ENCODE measurements at regions of chr11 and their contacts with region 1.

Region 1: DNA sequence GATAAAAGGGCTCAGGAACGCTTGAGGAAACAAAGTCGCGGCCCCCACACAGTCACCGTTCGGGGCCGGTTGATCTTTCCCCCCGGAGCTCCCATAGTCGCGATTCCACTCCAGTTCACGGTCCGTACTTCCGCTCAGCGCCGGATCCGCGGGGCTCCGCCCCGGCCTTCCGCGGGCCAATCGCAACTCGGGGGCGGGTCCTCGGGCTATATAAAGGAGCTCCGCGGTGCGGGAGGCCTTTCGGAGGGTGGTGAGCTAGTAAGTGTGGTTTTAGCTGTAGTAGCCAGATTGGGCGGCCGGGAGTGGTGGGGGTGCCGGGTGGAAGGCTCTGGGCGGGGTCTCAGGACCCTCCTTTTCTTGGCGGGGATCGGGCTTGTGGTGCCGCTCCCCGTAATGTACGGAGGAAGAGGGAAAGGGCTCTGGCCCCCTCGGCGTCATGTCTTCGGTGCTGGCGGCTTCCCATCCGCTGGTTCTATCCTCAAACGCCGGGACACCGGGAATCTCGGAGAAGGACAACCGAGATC is at the starts of genes C11orf98 and CSKMT:
- DNase-seq: no peak
- H3K4me3 ChIP-seq: peak within 1 kb of the TSS; percentile 92
- CTCF ChIP-seq: no peak

Region 2: GRCh38 chr11:62573592-62574362 is 91.4 kb before region 1 on chr11 and contains the start of gene EEF1G:
- CTCF ChIA-PET with region 1: no interaction called
- POLR2A ChIA-PET with region 1: interaction called, 16 read pairs
- DNase-seq: peak; percentile 99
- H3K4me3 ChIP-seq: peak within 1 kb of the TSS; percentile 97
- CTCF ChIP-seq: no peak

Region 3: DNA sequence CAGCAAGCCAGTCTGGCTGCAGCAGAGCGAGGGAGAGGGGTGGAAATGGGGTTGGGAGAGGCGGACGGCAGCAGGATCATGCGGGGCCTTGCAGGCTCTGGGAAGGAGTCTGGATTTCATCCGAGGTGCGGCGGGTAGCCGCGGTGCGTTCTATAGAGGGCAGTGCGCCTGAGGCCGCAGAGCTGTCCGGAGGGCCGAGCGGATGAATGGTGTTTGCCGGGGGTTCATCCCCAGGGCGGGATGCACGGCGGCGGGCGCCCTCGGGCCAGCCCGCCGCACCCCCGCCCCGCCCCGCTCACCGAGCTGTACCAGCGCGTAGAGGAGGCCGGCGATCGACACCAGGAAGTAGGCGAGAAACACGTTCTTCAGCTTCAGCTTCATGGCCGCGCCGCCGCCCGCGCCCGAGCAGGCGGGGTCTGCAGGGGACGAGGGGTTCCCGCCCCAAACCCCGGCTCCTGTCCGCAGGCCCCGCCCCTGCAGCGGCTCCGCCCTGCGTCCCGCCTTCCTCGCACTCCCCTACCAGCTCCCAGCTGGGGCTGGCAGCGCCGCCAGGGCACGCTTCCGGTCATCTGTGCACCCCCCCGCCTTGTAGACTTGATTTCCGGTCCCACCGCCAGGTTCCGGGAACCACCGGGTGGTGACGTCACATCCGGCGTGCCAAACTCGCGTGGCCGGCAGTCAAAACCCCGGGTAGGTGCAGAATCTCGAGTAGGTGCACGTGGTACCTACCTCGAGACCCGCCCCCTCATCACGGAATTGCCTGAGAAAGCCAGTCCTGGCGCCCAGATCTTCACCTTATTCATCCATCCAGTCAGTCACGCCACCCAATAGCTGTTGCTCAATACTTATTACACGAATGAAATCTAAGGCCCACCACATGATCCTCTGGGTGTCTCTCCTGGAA is 43.3 kb before region 1 on chr11 and contains the start of gene B3GAT3:
- CTCF ChIA-PET with region 1: interaction called, 3 read pairs
- POLR2A ChIA-PET with region 1: interaction called, 16 read pairs
- DNase-seq: peak; percentile 82
- H3K4me3 ChIP-seq: peak within 1 kb of the TSS; percentile 83
- CTCF ChIP-seq: peak; percentile 24

Region 4: GRCh38 chr11:62678770-62679696 is 13.9 kb after region 1 on chr11 and contains the start of gene UBXN1:
- CTCF ChIA-PET with region 1: interaction called, 30 read pairs
- POLR2A ChIA-PET with region 1: interaction called, 44 read pairs
- DNase-seq: no peak
- H3K4me3 ChIP-seq: peak within 1 kb of the TSS; percentile 95
- CTCF ChIP-seq: no peak

Region 5: DNA sequence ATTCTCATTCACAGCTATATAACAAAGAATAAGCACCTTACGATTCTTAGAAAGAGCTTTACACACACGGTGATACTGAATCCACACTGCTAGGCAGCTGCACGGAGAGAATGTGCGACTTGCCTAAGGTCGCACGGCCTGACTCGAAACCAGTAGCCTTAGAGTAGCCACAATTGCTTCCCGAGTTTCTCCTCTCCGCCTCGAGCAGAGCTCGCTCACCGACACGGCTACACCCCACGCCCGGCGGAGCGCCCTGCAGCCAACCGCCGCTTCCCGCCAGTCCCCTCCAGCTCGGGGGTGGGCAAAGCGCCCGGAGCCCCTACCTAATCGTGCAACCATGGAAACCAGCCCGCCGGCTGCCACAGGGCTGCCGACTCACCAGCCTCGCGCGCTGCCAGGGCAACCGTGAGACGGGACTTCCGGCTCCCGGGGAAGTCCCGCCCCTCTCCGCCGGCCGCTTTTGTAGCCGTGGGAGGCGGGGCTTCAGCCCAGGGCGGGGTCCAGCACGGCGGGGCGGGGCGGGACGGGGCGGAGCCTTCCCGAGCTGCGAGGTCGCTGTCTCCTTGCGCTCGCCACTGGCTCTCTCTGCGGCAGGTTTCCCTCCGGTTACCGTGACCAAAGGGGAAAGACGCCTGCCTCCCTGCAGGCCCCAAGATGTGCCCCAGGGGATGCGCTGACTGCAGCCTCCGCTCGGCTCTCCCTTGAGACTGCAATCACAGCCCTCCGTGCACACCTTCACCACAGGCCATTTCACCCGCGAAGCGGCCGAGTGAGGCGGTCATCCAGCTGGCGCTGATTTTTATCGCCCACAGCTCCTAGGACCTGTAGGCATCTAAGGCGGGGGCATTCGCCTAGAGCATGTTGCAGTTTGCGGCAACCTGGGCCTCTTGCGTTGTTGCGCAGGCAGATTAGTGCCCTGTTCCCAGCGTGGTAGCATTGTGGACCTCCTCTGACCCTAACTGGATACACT is 41.0 kb after region 1 on chr11:
- CTCF ChIA-PET with region 1: interaction called, 3 read pairs
- POLR2A ChIA-PET with region 1: interaction called, 18 read pairs
- DNase-seq: no peak
- H3K4me3 ChIP-seq: peak overlapping the region; percentile 77
- CTCF ChIP-seq: no peak

Region 6: DNA sequence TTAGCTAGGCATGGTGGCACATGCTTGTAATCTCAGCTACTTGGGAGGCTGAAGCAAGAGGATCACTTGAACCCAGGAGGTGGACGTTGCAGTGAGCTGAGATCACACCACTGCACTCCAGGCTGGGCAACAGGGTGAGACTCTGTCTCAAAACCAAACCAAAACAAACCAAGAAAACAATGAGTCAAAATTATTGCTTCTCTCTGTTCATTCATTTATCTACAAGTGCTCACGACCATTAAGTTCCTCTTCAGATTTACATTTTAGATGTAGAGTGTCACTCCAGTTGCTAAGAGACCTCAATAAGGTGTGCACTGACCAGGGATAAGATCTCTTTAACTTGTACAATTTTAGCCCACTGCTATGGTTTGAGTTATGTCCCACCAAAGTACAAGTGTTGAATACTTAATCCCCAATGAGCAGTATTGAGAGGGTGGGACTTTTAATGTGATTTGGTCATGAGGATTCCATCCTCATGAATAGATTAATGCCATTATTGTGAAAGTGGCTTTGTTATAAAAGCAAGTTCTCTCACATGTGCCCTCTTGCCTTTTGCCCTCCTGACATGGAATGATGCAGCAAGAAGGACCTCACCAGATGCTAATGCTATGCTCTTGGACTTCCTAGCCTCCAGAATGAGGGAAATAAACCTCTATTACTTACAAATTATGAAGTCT is 54.3 kb after region 1 on chr11:
- CTCF ChIA-PET with region 1: no interaction called
- POLR2A ChIA-PET with region 1: no interaction called
- DNase-seq: no peak
- H3K4me3 ChIP-seq: no peak overlapping the region
- CTCF ChIP-seq: no peak

Region 7: DNA sequence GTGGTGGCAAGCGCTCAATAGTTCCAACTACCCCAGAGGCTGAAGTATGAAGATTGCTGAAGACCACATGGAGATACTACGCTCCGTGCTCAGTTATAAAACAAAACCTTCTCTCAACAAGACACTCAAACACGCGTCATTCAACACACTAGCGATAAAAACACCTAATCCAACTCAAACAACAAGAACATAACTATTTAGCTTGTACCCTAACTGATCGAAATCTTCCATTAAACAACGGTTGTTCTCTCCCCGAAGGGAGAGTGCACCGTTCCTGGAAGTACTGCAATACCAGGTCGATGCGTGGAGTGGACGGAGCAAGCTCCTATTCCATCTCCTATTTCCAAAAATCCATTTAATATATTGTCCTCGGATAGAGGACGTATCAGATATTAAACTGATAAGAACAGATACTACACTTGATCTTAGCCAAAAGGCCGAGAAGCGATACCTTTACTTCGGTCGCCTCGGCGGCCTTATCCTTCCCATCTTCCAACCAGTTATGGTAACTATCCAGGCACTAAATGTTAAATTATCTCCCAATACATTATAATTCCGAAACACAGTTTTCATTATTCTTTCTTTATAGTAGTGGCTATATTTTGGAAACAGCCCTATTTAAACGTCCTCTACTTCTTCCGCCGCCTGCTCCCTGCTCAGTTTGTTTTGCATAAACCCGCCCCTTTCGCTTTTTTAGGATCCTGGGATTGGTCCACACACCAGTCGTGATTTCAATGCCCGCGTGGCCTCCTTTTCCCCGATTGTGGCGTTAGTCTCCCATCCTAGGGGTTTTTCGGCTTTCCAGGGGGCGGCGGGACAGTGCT is 176.4 kb after region 1 on chr11:
- CTCF ChIA-PET with region 1: no interaction called
- POLR2A ChIA-PET with region 1: interaction called, 16 read pairs
- DNase-seq: peak; percentile 99
- H3K4me3 ChIP-seq: peak overlapping the region; percentile 49
- CTCF ChIP-seq: no peak

Region 8: DNA sequence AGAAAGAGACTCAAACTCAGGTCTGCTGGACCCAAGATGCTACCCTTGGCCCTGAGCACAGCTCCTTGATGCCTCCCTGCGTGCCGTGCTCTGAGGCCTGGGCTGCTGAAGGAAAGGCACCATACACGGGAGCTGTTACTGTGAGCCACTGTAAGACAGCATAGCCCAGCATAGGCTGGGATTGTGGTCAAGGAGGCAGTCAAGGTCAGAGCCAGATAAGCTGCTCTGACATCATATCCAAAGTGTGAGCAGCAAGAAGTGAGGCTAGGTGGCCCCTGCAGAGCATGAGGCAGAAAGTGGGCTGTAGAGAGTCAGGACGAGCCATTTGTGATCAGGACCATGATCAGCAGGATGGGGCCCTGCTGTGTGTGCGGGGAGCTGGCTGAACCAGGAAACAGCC is 342.8 kb after region 1 on chr11:
- CTCF ChIA-PET with region 1: no interaction called
- POLR2A ChIA-PET with region 1: no interaction called
- DNase-seq: no peak
- H3K4me3 ChIP-seq: no peak overlapping the region
- CTCF ChIP-seq: no peak

Measured in AG04449 (cell line).